GM12878 (cell line): ENCODE measurements at regions of chr2 and their contacts with region 1.

Region 1: GRCh38 chr2:63488118-63488713 is 100.1 kb downstream of the WDPCP start:
- DNase-seq: no peak
- ATAC-seq: peak; percentile 66
- H3K4me3 ChIP-seq: no peak overlapping the region
- H3K27ac ChIP-seq: no peak overlapping the region
- H3K4me1 ChIP-seq: no peaks in the 10 kb centered on the region
- H3K27me3 ChIP-seq: no peaks in the 10 kb centered on the region
- CTCF ChIP-seq: peak; percentile 54 to 68 (median 61)
- EP300 ChIP-seq: no peak
- POLR2A ChIP-seq: no peak
- RAD21 ChIP-seq: peak; percentile 64

Region 2: GRCh38 chr2:63078852-63079606 is 409.2 kb before region 1 on chr2:
- CTCF ChIA-PET with region 1: interaction called, 29 read pairs
- POLR2A ChIA-PET with region 1: no interaction called
- RAD21 ChIA-PET with region 1: interaction called, 15 read pairs
- SMC1A ChIA-PET with region 1: interaction called, 18 read pairs
- in situ Hi-C with region 1: no loop called
- intact Hi-C with region 1: loop called (anchors 2 kb)
- DNase-seq: no peak
- ATAC-seq: peak; percentile 88
- H3K4me3 ChIP-seq: no peak overlapping the region
- H3K27ac ChIP-seq: no peak overlapping the region
- H3K4me1 ChIP-seq: no peaks in the 10 kb centered on the region
- H3K27me3 ChIP-seq: no peaks in the 10 kb centered on the region
- CTCF ChIP-seq: peak; percentile 40 to 71 (median 54)
- EP300 ChIP-seq: no peak
- POLR2A ChIP-seq: no peak
- RAD21 ChIP-seq: peak; percentile 61

Region 3: DNA sequence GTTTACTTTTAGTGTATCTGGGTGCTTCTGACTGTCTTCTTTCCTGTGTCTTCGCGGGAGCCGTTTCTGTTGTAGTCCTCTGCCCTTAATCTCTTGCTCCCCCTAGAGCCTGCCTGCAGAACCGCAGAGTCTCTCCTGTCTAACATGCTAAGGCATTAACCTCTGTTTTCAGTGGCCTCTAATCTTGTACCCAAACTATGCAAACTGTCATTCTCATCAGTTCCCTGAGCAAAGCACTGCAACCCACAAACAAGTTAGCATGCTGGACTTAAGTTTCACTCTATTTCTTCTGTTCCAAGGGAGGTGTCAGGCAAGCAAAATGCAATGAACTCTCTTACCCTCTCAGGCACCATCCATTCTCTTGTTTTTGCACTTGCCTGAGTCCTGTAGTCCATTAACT is 299.2 kb before region 1 on chr2:
- CTCF ChIA-PET with region 1: interaction called, 12 read pairs
- POLR2A ChIA-PET with region 1: no interaction called
- RAD21 ChIA-PET with region 1: no interaction called
- SMC1A ChIA-PET with region 1: interaction called, 11 read pairs
- in situ Hi-C with region 1: no loop called
- intact Hi-C with region 1: no loop called
- DNase-seq: peak; percentile 12
- ATAC-seq: peak; percentile 99
- H3K4me3 ChIP-seq: no peak overlapping the region
- H3K27ac ChIP-seq: no peak overlapping the region
- H3K4me1 ChIP-seq: no peaks in the 10 kb centered on the region; the same call in 1 of the 2 replicates
- H3K27me3 ChIP-seq: no peaks in the 10 kb centered on the region
- CTCF ChIP-seq: peak; percentile 80 to 92 (median 83)
- EP300 ChIP-seq: no peak
- POLR2A ChIP-seq: no peak
- RAD21 ChIP-seq: peak; percentile 63

Region 4: DNA sequence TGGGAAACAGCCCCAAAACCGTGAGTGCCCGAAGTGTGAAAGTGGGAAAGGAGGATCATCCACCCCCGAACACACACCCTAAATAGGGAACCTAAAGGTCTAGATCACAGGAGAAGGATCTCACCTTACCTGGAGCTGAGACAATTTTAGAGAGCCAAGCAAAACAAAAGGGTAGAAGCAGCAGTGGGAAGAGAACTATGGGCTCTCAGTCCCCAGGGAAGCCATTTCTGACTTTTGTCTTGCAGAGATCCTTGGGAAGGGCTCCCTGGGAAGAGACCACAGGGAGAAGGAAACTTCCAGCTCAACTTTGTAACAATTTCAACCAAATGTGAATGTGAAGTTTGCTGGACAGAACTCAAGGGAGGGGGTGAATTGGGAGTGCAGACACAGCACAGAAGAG is 10.5 kb before region 1 on chr2:
- CTCF ChIA-PET with region 1: interaction called, 30 read pairs
- POLR2A ChIA-PET with region 1: no interaction called
- RAD21 ChIA-PET with region 1: no interaction called
- SMC1A ChIA-PET with region 1: interaction called, 14 read pairs
- in situ Hi-C with region 1: no loop called
- intact Hi-C with region 1: no loop called
- DNase-seq: no peak
- ATAC-seq: no peak
- H3K4me3 ChIP-seq: no peak overlapping the region
- H3K27ac ChIP-seq: no peak overlapping the region
- H3K4me1 ChIP-seq: no peaks in the 10 kb centered on the region
- H3K27me3 ChIP-seq: no peaks in the 10 kb centered on the region
- CTCF ChIP-seq: no peak
- EP300 ChIP-seq: no peak
- POLR2A ChIP-seq: no peak
- RAD21 ChIP-seq: no peak